GM10248 (cell line): ENCODE measurements at regions of chr19 and their contacts with region 1.

Region 1: DNA sequence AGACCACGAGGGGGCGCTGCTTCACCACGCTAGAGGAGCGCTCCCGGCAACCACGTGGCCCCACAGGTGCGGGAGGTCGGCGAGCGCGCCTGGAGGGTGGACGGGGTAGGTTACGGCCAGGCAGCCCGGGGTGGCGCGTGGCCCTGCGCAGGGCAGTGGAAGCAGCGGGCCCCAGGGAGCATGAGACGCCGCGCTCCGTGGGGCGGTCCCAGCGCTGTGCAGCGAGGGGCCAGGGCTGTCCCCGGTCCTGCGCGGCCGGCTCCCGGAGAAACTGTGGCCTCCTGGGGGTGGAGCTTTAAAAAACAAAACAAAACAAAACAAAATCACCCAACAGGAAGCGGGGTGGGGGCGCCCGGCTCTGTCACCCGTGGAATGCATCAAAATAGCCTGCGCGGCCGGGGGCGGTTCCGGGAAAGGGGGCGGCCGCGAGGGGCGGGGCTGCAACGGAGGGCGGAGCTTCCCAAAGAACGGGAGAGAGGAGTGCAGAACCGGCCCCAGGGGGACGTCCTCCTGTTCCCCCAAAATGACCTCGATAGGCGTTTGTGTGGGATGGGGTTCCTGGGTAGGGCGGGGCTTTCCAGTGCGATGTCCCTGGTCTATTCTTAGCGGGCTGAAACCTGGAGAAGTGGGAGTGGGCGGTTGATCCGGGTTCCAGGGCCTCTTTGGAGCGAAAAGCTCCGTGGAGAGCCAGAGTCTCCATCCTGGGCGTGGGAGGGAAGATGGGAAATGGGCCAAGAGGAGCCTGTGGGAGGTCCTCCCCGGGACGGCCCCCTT is 27.3 kb downstream of the NUMBL start:
- DNase-seq: peak; percentile 92
- CTCF ChIP-seq: peak; percentile 99

Region 2: DNA sequence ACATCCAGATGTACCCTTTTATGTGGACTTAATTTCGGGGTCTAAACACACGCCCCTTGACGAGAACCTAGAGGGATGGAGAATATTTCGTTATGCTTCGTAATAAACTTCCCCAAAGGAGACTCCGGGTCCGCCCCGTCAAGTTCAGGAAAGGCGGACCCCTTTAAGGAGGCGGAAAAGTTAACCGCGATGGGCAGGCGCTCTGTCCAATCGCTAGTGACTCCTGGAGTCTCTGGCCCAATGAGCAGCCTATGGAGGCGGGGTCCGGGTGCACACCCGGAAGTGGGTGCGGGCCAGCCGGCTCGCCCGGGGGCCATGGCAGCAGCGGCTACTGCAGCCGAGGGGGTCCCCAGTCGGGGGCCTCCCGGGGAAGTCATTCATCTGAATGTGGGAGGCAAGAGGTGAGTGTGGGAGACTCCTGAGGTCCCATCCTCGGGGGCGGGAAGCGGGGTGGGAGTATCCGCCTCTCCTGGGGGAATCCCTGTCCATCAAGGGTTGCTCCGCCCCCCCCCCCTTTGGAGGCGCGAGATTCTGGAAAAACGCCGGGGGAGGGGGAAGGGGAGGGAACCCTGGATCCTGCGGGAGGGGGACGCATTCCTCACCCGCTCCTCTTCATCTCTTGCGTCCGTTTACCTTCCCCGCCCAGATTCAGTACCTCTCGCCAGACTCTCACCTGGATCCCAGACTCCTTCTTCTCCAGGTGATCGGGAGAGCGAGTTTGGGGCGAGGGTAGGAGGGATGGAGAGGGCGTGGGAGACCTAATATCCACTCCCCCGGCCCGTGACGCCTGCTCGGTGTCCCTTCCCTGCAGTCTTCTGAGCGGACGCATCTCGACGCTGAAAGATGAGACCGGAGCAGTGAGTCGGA is 86.3 kb before region 1 on chr19 and contains the start of gene SHKBP1:
- CTCF ChIA-PET with region 1: no interaction called
- POLR2A ChIA-PET with region 1: no interaction called
- DNase-seq: peak; percentile 99
- CTCF ChIP-seq: no peak

Region 3: DNA sequence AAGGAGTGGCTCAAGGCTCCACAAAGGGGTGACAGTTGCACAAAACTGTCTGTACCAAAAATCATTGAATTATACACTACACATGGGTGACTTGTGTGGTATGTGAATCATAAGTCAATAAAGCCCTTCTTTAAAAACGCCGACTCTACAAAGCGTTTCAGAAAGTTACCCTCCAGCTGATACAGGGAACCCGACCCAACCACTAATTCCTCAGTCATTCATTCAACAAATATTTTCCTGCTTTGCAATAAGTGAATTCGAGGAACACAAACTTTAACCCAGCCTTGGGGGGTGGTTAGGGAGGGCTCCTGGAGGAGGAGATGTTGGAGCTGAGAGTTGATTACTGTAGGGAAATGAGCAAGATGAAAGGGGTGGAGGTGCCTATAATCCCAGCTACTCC is 29.9 kb before region 1 on chr19:
- CTCF ChIA-PET with region 1: interaction called, 24 read pairs
- POLR2A ChIA-PET with region 1: no interaction called
- DNase-seq: no peak
- CTCF ChIP-seq: no peak

Region 4: GRCh38 chr19:40690693-40691420 is 27.7 kb after region 1 on chr19:
- CTCF ChIA-PET with region 1: interaction called, 10 read pairs
- POLR2A ChIA-PET with region 1: no interaction called
- DNase-seq: peak; percentile 99
- CTCF ChIP-seq: no peak

Region 5: GRCh38 chr19:40806488-40807468 is 143.7 kb after region 1 on chr19:
- CTCF ChIA-PET with region 1: interaction called, 14 read pairs
- POLR2A ChIA-PET with region 1: no interaction called
- DNase-seq: peak; percentile 74
- CTCF ChIP-seq: peak; percentile 72

Region 6: DNA sequence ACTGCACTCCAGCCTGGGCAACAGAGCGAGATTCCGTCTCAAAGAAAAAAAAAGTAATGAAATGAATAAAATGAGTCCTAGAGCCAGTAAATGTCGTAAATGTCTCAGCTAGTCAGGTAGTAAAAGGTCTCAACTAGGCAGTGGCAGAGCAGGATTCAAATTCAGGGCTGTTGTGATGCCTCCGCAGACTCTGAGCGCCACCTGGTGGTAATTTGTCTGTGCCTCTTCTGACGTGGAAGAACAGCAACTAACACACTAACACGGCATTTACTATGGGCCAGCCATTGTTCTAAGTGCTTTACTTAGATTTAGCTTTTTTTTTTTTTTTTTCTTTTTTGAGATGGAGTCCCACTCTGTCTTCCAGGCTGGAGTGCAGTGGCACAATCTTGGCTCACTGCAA is 481.3 kb after region 1 on chr19:
- CTCF ChIA-PET with region 1: interaction called, 13 read pairs
- POLR2A ChIA-PET with region 1: no interaction called
- DNase-seq: peak; percentile 71
- CTCF ChIP-seq: peak; percentile 79